Sciatic nerve (tissue), 2 donors: ENCODE measurements at regions of chr14 and their contacts with region 1.

Region 1: GRCh38 chr14:74860906-74861733 is 14.8 kb downstream of the PROX2 start:
- DNase-seq: peak; percentile 95
- ATAC-seq: peak; percentile 84

Region 2: DNA sequence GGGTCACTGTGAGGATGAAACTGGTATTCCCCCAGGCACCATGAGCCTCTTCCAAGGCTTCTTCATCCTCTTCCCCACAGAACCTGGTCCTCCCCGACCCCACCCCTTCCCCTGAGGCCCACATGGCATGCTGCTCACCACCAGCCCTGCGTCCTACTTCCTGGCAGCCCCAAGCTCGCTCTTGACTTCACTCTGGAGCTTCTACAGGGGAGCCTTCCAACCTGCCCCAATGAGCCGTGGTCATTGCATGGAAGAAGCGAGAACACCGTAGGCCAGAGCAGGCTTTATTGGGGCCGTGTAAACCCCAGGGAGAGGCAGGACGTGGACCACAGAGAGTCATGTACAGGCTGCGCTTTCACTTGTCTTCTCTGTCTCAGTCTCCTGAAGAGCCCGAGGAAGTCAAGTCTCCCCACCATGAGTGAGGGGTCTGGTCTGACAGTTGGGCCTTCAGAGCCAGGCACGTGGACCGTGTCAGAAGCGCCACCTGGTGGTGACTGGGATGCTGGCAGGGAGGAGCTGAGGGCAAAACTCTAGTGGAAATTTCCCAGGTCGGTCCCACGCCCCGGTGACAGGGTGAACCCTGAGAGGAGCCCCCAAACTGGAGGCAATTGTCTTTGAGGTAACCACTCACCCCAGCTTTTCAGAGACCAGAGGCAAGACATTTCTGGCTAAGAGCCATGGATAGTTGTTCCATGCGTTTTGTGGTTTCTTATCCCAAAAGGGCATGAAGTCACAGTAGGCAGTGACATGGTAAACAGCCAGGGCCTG is 44.4 kb after region 1 on chr14:
- intact Hi-C with region 1: loop called (anchors 5 kb)
- DNase-seq: peak; percentile 91
- ATAC-seq: peak; percentile 72

Region 3: DNA sequence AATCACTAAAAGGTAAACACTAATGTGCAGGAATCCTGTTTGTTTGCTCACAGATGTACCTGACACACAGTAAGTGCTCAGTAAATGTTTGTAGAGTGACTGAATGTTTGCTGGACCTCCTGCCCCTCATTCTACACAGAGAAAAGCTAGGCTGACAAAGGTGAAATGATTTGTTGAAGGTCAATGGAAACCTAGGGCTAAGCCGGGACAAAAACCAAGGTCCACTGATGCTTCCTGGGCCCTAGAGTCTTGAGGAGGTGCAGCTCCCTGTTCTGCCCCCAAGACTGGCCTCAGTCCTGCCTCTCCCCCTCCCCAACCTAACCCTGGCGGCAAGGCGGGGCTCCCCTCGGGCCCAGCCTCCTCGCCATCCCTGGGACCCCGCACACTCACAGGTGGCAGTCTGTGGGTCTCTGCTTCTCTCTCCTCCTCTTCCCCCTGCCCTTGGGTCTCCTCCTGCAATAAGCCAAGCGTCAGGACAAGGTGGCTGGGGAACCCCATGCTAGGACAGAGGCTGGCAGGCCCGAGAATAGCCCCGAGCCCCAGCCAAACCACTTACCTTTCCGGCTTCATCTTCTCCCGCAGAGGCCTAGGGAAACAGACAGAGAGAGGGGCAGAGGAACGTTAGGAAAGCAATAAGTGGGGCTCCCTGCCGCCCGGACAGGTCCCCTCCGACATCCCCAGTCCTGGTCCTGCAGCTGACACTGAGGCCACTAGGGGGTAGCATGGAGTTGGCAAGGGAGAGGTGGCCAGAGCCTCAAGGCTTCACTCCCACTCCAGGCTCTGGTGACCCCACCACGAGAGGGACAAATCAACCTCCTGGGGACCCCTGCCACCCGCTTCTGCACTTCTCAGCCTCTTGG is 84.9 kb after region 1 on chr14:
- intact Hi-C with region 1: no loop called
- DNase-seq: peak; percentile 90
- ATAC-seq: peak; percentile 89

Region 4: DNA sequence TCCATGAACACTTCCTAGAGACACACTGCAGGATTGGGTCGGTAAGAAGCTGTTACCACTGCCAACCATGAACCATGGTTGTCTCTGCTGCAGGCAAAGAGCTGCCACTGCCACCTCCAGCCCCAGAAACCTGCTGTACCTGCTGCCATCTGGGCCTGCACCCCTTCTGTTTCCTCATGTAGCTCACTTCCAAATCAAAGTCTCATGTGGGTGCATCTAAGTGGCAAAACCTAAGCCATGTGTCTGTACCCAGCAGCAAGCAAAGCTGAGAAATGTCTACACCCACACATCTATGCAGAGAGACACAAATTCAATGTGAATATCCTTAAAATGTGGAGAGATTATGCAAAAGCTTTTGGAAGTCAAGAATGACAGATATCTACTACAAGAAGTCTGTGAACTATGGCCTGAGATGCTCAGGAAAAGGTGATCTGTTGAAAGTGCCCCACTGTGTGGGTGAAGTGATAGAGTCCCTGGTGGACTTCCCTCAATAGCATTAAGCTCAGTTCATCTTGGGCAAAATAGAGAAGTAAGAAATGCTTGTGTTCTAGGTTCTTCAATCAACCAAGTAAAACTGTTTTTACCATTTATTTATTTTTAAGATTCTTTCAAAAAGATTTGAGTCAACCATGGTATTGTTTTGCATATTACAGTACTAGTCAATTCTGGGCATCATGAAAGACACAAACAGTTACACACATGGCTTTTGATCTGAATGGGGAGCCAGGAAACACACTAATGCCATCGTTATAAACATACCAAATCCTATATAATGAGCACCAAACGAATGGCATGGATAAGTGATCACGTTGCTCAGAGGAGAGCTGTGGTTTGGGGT is 481.9 kb after region 1 on chr14:
- intact Hi-C with region 1: no loop called
- DNase-seq: no peak
- ATAC-seq: no peak